WTC11 (cell line): ENCODE measurements at regions of chr16 and their contacts with region 1.

Region 1: GRCh38 chr16:4734063-4734729 is at the starts of genes ANKS3 and DNAAF8:
- DNase-seq: peak; percentile 95
- ATAC-seq: peak; percentile 94
- H3K4me3 Mint-ChIP-seq: peak within 1 kb of the TSS; percentile 93
- H3K27ac Mint-ChIP-seq: peak within 1 kb of the TSS; percentile 97
- H3K4me1 Mint-ChIP-seq: peaks cover 9% of the 10 kb centered on the region
- H3K27me3 Mint-ChIP-seq: peaks cover 4% of the 10 kb centered on the region; the same call in 1 of the 2 replicates
- CTCF ChIP-seq: no peak
- total RNA-seq, gene ANKS3: 28.6 to 35.6 TPM (median 31.5 TPM) in 3 replicates
- total RNA-seq, gene DNAAF8: 0.09 to 0.41 TPM (median 0.14 TPM) in 3 replicates

Region 2: GRCh38 chr16:4640572-4641305 is 93.5 kb before region 1 on chr16:
- CTCF ChIA-PET with region 1: no interaction called
- POLR2A ChIA-PET with region 1: no interaction called
- DNase-seq: no peak
- ATAC-seq: no peak
- H3K4me3 Mint-ChIP-seq: no peak overlapping the region
- H3K27ac Mint-ChIP-seq: peak overlapping the region; percentile 75; the same call in 1 of the 2 replicates
- H3K4me1 Mint-ChIP-seq: 0 out of 2 replicates have a peak, but pooled peaks cover 4% of the 10 kb centered on the region
- H3K27me3 Mint-ChIP-seq: no peaks in the 10 kb centered on the region
- CTCF ChIP-seq: no peak

Region 3: DNA sequence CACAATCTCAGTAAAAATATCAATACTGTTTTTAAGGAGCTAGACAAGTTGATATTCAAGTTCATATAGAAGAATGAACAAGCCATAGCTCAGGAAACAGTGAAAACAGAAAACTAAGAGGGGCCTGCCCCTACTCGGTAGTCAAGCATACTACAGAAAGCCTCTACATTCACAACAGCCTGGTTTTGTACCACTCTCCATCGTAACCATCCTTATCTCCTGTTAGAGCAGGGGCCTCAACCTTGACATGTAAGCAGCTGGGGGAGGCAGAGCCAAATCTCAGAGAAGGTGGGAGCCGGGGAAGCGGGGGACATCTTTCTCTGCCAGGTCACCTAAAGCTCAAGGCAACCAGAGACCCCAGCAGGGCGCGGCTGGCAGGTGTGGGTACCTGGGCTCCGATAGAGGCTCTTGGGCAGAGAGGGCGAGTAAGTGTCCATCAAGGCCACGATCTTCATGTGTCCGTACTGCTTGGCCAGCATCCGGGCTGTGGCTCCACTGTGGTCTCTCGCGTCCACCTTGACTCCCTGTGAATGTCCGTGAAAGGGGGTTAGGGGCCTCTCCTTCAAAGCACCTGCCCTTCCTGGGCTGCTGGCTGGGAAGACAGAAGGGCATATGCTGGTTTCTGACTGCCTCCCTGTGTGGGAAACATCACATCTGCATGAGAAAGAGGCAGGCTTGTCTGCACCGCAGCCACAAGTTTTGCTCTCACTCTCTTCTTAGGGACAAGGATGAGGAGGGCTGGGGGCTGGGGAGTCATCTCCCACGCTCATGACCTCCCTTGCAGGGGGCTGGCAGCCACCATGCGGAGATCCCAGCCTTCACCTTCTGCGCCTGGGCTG is 20.3 kb before region 1 on chr16:
- CTCF ChIA-PET with region 1: interaction called, 12 read pairs
- POLR2A ChIA-PET with region 1: interaction called, 5 read pairs
- DNase-seq: peak; percentile 55
- ATAC-seq: peak; percentile 89
- H3K4me3 Mint-ChIP-seq: no peak overlapping the region
- H3K27ac Mint-ChIP-seq: peak overlapping the region; percentile 97
- H3K4me1 Mint-ChIP-seq: peaks cover 29% of the 10 kb centered on the region
- H3K27me3 Mint-ChIP-seq: no peaks in the 10 kb centered on the region
- CTCF ChIP-seq: no peak

Region 4: GRCh38 chr16:4820652-4821051 is 86.5 kb after region 1 on chr16:
- CTCF ChIA-PET with region 1: no interaction called
- POLR2A ChIA-PET with region 1: no interaction called
- DNase-seq: no peak
- ATAC-seq: no peak
- H3K4me3 Mint-ChIP-seq: no peak overlapping the region
- H3K27ac Mint-ChIP-seq: no peak overlapping the region
- H3K4me1 Mint-ChIP-seq: no peaks in the 10 kb centered on the region
- H3K27me3 Mint-ChIP-seq: no peaks in the 10 kb centered on the region
- CTCF ChIP-seq: no peak